Left lung (tissue), 14 donors: ENCODE measurements at regions of chr15 and their contacts with region 1.

Region 1: GRCh38 chr15:96701443-96701842 is 370.9 kb downstream of the NR2F2 start:
- DNase-seq: no peak
- ATAC-seq: no peak
- H3K4me3 ChIP-seq: no peak overlapping the region
- H3K27ac ChIP-seq: no peak overlapping the region
- H3K4me1 ChIP-seq: no peaks in the 10 kb centered on the region
- H3K27me3 ChIP-seq: peaks cover 0 to 10% of the 10 kb centered on the region in 2 donors
- CTCF ChIP-seq: no peak

Region 2: GRCh38 chr15:96416934-96417759 is 284.3 kb before region 1 on chr15:
- intact Hi-C with region 1: no loop called
- DNase-seq: peak in 1 of 4 donors; percentile 68
- ATAC-seq: peak; percentile 33
- H3K4me3 ChIP-seq: no peak overlapping the region
- H3K27ac ChIP-seq: no peak overlapping the region
- H3K4me1 ChIP-seq: peaks cover 0 to 10% of the 10 kb centered on the region in 2 donors
- H3K27me3 ChIP-seq: peaks cover 95 to 100% of the 10 kb centered on the region in 2 donors
- CTCF ChIP-seq: no peak

Region 3: DNA sequence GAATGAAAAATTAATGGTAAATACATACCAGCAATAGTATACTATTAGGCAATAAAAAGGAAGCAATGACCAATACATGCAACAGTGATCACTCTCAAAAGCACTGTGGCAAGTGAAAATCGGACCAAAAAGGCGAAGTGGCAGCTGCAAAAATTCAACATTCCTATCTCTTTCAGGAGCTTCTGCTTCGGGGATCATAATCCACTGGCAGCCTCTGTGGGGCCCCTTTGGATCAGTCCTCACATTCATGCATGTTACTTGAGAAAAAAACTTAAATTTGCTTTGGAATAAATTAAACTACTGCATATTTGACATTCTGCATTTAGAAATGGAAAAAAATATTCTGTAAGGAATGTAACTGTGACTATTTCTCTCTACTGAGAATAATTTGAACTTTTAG is 54.7 kb after region 1 on chr15:
- intact Hi-C with region 1: loop called in 1 of 2 experiments (anchors 5 kb)
- DNase-seq: no peak
- ATAC-seq: no peak
- H3K4me3 ChIP-seq: no peak overlapping the region
- H3K27ac ChIP-seq: no peak overlapping the region
- H3K4me1 ChIP-seq: no peaks in the 10 kb centered on the region
- H3K27me3 ChIP-seq: no peaks in the 10 kb centered on the region
- CTCF ChIP-seq: no peak

Region 4: DNA sequence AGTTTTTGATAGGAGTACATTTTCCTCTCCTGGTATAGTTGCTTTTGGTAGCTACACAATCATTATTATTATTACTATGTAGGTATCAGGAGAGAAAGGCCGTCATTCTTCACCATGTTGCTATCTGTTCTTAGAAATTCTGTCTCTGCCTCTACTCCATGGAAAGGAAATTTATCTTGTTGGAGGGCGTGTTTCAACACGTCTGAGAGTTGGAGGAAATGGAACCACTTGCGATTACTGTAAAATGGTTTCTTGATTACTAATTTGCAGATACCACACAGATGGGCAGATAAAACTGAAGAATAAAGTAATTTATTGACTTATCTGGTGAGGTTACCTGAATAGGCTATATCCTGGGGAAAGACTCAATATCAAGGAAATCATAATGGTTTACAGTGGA is 117.4 kb after region 1 on chr15:
- intact Hi-C with region 1: no loop called
- DNase-seq: no peak
- ATAC-seq: no peak
- H3K4me3 ChIP-seq: no peak overlapping the region
- H3K27ac ChIP-seq: no peak overlapping the region
- H3K4me1 ChIP-seq: no peaks in the 10 kb centered on the region
- H3K27me3 ChIP-seq: peaks cover 0 to 4% of the 10 kb centered on the region in 2 donors
- CTCF ChIP-seq: no peak